ENCODE measurements at regions of chr3 and their contacts with region 1.

Region 1: DNA sequence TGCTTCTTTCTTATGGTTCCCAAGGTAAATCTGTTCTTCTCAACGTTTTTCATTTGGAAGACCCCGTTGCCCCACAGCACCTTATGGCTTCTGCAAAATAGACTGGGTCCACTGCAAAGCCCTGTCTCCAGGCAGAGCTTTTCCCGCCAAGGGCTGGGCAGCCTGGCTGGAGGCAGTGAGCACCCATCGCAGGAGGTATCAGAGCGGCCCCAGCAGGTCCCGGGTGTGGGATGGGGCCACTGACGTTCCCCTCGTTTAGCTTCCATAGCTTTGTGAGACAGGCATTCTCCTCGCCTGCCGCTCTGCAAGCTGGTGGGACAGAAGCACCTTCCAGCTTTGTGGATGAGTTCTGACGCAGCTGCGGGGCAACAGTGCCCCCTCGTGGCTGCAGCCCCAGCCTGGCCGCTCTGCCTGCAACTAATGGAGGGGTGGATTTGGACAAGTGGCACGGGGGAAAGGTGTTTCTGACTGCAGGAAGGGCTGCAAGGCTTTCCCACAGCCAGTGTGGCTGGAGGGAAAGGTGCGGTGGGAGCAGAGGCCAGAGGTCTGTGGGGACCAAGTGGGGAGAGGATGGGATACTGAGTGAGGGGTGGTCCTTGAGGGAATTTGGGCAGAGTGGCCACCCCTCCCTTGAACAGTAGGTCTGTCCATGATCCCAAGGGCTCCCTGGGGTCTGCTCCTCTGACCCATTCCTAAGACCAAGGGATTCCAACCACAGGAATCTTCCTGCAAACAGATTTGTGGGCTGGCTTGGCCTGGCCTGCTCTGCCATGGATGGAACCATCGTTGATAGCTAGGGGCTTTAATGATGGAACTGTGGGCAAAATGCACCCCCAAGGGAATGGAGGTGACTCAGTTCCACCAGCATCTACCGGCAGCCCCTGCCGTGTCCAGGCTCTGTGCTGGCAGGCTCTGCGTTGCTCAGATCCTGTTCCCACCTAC is 99.4 kb downstream of the FBLN2 start:
- DNase-seq: peak; percentile 96
- ATAC-seq: peak; percentile 77
- H3K4me3 Mint-ChIP-seq: no peak overlapping the region
- H3K27ac Mint-ChIP-seq: peak overlapping the region; percentile 93
- H3K4me1 Mint-ChIP-seq: peaks cover 20% of the 10 kb centered on the region
- H3K27me3 Mint-ChIP-seq: peaks cover 7% of the 10 kb centered on the region
- CTCF ChIP-seq: peak; percentile 96

Region 2: GRCh38 chr3:13479581-13480339 is 168.6 kb before region 1 on chr3 and contains the start of gene HDAC11:
- CTCF ChIA-PET with region 1: interaction called, 42 read pairs
- POLR2A ChIA-PET with region 1: interaction called, 3 read pairs
- DNase-seq: peak; percentile 99
- ATAC-seq: peak; percentile 93
- H3K4me3 Mint-ChIP-seq: peak within 1 kb of the TSS; percentile 85
- H3K27ac Mint-ChIP-seq: peak within 1 kb of the TSS; percentile 91
- H3K4me1 Mint-ChIP-seq: peaks cover 33% of the 10 kb centered on the region
- H3K27me3 Mint-ChIP-seq: peaks cover 28% of the 10 kb centered on the region
- CTCF ChIP-seq: no peak
- total RNA-seq, gene HDAC11: 11.5 to 12.5 TPM (median 12.0 TPM) in 3 replicates

Region 3: DNA sequence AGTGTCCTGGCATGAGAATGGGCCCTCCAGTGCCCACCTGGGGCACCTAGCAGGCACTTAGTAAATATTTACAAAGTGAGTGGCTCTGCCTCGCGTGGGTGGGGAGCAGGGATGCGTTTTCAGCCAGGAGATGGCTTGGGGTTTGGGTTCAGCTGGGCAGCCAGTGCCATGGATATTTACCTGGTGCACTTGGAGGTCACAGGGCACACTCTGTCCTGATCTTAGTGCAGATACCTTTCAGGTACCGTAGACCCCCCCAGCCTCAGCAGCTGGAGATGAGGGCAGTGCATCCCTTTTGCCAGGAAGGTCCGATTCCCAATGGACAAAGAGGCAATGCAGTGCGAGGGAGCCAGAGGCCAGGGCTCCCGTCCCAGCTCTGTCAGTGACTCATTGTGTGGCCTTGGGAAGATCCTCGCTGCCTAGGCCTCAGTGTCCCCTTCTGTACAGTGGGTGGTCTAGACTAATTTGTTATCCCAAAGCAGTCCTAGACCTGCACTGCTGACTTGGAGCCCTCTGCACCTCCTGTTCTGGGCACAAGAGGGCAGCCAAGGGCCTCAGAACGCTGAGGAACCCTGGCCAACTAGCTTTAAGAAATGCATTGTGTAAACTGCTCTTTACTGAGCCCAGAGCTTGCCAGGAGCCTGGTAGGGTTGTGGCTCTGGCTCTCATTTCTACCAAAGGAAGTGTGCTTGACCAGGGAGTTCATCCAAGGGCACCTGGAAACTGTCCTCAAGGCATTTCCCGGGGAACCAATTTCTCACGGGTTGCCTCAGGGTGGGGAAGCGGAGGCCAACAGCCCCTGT is 152.2 kb before region 1 on chr3:
- CTCF ChIA-PET with region 1: interaction called, 290 read pairs
- POLR2A ChIA-PET with region 1: interaction called, 5 read pairs
- DNase-seq: peak; percentile 86
- ATAC-seq: peak; percentile 91
- H3K4me3 Mint-ChIP-seq: no peak overlapping the region
- H3K27ac Mint-ChIP-seq: 0 out of 2 replicates have a peak overlapping the region, but pooled peaks have one; percentile 49
- H3K4me1 Mint-ChIP-seq: peaks cover 6% of the 10 kb centered on the region; the same call in 1 of the 2 replicates
- H3K27me3 Mint-ChIP-seq: no peaks in the 10 kb centered on the region; the same call in 1 of the 2 replicates
- CTCF ChIP-seq: peak; percentile 77

Region 4: GRCh38 chr3:13518516-13518953 is 129.8 kb before region 1 on chr3:
- CTCF ChIA-PET with region 1: interaction called, 18 read pairs
- POLR2A ChIA-PET with region 1: no interaction called
- DNase-seq: no peak
- ATAC-seq: no peak
- H3K4me3 Mint-ChIP-seq: no peak overlapping the region
- H3K27ac Mint-ChIP-seq: no peak overlapping the region
- H3K4me1 Mint-ChIP-seq: peaks cover 3% of the 10 kb centered on the region; the same call in 1 of the 2 replicates
- H3K27me3 Mint-ChIP-seq: no peaks in the 10 kb centered on the region; the same call in none of the 2 replicates
- CTCF ChIP-seq: no peak

Region 5: GRCh38 chr3:13537921-13538320 is 110.4 kb before region 1 on chr3:
- CTCF ChIA-PET with region 1: interaction called, 12 read pairs
- POLR2A ChIA-PET with region 1: no interaction called
- DNase-seq: no peak
- ATAC-seq: no peak
- H3K4me3 Mint-ChIP-seq: no peak overlapping the region
- H3K27ac Mint-ChIP-seq: no peak overlapping the region
- H3K4me1 Mint-ChIP-seq: peaks cover 16% of the 10 kb centered on the region
- H3K27me3 Mint-ChIP-seq: no peaks in the 10 kb centered on the region; the same call in 1 of the 2 replicates
- CTCF ChIP-seq: no peak

Region 6: DNA sequence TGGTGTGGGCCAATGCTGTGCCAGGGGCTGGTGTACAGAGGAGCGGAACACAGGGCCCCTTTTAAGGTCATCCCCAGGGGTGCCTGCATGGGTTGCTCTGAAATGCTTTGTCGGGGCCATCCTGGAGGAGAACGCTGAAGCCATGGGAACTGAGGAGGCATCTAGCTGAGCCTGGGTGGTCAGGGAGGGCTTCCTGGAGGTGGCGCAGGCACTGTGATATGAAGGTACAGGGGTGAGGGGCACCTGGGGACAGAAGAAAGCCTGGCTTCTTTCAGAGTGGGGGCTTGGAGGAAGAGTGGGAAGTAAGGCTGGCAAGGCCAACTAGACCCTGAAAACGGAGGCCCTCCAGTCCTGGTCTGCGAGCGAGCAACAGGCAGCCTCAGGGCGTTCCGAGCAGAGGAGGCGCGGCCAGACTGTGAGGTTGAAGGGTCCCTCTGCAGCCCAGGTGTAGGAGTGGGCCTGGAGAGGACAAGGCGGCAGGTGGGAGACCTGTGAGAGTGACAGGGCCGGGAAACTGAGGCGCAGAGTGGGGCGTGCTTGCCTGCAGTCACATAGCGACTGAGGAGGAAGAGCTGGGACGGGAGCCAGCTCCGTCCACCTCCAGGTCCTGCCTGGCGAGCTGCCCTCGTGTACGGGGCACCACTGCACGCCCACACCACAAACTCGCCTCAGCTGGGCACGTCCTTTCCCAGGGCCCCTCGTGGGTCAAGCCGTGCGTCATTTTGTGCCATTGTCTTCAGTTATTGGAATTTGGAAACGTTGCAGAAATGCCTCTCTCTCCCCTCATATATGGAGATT is 95.3 kb before region 1 on chr3:
- CTCF ChIA-PET with region 1: interaction called, 14 read pairs
- POLR2A ChIA-PET with region 1: no interaction called
- DNase-seq: no peak
- ATAC-seq: no peak
- H3K4me3 Mint-ChIP-seq: no peak overlapping the region
- H3K27ac Mint-ChIP-seq: no peak overlapping the region
- H3K4me1 Mint-ChIP-seq: peaks cover 29% of the 10 kb centered on the region
- H3K27me3 Mint-ChIP-seq: peaks cover 14% of the 10 kb centered on the region
- CTCF ChIP-seq: no peak

Region 7: DNA sequence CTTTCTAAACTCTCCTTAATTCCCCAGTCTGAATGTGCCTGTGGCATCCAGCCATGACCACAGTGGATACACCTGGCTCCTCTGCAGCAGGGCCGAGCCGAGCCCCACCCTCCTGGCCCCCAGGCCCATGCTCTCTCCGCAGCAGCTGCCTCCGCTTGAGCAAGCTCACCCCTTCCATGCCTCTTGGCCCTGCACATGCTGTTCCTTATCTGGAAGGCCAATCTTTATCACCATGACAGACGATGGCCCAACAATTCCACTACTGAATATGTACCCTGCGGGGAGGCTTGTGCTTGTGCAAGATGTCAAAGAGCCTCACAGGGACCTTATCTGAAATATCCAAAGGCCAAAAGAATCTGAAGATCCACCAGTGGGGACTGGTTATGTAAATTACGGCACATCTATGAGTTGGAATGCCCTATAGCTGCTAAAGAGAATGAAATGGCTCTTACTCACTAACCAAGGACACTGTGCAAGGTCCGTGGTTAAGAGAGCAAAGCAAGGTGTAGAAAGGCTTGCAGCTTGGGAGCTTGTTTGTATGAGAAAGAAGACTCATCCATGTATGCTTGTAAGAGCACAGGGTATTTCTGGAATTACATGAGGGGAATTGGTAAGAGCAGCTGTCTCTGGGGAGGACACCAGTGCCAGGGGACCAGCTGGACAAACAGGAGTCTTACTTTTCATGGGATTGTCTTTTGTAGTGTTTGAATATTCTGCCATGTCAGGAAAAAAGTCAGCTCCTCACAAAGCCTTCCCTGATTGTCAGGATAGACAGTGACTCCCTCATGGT is 176.4 kb after region 1 on chr3:
- CTCF ChIA-PET with region 1: no interaction called
- POLR2A ChIA-PET with region 1: no interaction called
- DNase-seq: no peak
- ATAC-seq: no peak
- H3K4me3 Mint-ChIP-seq: no peak overlapping the region
- H3K27ac Mint-ChIP-seq: no peak overlapping the region
- H3K4me1 Mint-ChIP-seq: 0 out of 2 replicates have a peak, but pooled peaks cover 6% of the 10 kb centered on the region
- H3K27me3 Mint-ChIP-seq: peaks cover 3% of the 10 kb centered on the region; the same call in 1 of the 2 replicates
- CTCF ChIP-seq: no peak

Region 8: GRCh38 chr3:13884851-13885703 is 236.7 kb after region 1 on chr3:
- CTCF ChIA-PET with region 1: interaction called, 90 read pairs
- POLR2A ChIA-PET with region 1: no interaction called
- DNase-seq: peak; percentile 77
- ATAC-seq: peak; percentile 84
- H3K4me3 Mint-ChIP-seq: no peak overlapping the region
- H3K27ac Mint-ChIP-seq: no peak overlapping the region
- H3K4me1 Mint-ChIP-seq: no peaks in the 10 kb centered on the region
- H3K27me3 Mint-ChIP-seq: peaks cover 82% of the 10 kb centered on the region
- CTCF ChIP-seq: peak; percentile 88